H1 (cell line): ENCODE measurements at regions of chr3 and their contacts with region 1.

Region 1: GRCh38 chr3:12135029-12135657 is 23.6 kb downstream of the TIMP4 start:
- DNase-seq: peak; percentile 17 to 78
- H3K4me3 ChIP-seq: no peak overlapping the region
- H3K27ac ChIP-seq: no peak overlapping the region
- H3K4me1 ChIP-seq: no peaks in the 10 kb centered on the region
- H3K27me3 ChIP-seq: no peaks in the 10 kb centered on the region
- CTCF ChIP-seq: peak; percentile 86 to 92 (median 90)
- EP300 ChIP-seq: no peak
- POLR2A ChIP-seq: no peak
- RAD21 ChIP-seq: peak; percentile 87 to 92

Region 2: DNA sequence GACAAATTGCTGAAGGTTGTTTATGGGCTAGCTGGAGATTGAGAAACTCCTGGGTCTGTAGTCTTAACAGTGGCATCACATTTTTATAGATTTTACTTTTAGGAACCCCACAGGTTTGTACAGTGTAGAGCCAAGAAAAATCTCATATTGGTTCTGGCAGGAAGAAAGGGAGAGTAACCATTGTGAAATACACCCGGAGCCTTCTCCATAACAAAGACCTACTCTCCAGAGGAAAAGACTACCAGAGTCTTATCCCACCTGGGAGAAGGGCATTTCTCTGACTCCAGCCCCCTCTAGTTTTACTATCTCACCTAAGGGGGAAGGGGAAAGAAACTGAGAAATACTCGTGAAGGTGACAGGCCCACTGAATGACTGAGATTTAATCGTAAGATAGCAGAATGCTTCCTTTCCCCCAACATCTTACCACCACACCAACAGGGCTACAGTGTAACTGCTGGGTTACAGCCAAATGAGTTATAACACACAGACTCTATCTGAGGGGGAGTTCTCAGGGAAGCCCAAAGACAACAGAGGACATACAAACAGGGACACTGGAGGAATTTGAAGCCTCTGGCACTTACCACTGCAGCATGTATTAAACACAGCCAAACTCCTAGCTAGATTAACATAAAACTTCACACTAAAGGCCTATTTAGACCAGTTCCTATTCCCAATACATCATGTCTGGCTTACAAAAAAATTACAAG is 74.9 kb before region 1 on chr3:
- CTCF ChIA-PET with region 1: no interaction called
- POLR2A ChIA-PET with region 1: no interaction called
- DNase-seq: no peak
- H3K4me3 ChIP-seq: peak overlapping the region in 1 of 4 experiments; percentile 4; a peak in 1 of 8 replicates
- H3K27ac ChIP-seq: no peak overlapping the region
- H3K4me1 ChIP-seq: peaks cover 3 to 16% (median 7%) of the 10 kb centered on the region in 4 experiments; a peak in 4 of 7 replicates
- H3K27me3 ChIP-seq: no peaks in the 10 kb centered on the region
- CTCF ChIP-seq: no peak
- EP300 ChIP-seq: no peak
- POLR2A ChIP-seq: no peak
- RAD21 ChIP-seq: peak in 1 of 2 experiments; percentile 1; a peak in 1 of 4 replicates

Region 3: DNA sequence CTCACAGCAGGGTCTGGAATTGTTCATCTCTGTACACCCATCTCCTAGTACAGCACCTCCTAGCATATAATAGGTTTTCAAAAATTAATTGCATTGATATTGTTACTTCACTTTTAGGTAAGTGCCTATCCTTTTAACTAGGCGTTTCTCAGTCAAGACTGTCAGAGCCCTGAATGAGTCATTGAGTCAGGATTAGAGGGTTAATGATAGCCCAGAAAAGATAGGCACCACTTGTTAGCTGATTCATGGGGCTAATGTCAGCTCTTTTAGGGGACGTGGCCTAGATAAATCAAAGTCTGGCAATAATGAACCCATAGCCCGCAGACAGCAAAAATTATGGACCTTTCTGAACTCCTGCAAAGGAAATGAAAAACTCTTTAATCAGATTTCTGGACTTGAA is 19.3 kb before region 1 on chr3:
- CTCF ChIA-PET with region 1: interaction called, 10 read pairs
- POLR2A ChIA-PET with region 1: no interaction called
- DNase-seq: no peak
- H3K4me3 ChIP-seq: no peak overlapping the region
- H3K27ac ChIP-seq: no peak overlapping the region
- H3K4me1 ChIP-seq: no peaks in the 10 kb centered on the region
- H3K27me3 ChIP-seq: no peaks in the 10 kb centered on the region
- CTCF ChIP-seq: no peak
- EP300 ChIP-seq: no peak
- POLR2A ChIP-seq: no peak
- RAD21 ChIP-seq: no peak

Region 4: DNA sequence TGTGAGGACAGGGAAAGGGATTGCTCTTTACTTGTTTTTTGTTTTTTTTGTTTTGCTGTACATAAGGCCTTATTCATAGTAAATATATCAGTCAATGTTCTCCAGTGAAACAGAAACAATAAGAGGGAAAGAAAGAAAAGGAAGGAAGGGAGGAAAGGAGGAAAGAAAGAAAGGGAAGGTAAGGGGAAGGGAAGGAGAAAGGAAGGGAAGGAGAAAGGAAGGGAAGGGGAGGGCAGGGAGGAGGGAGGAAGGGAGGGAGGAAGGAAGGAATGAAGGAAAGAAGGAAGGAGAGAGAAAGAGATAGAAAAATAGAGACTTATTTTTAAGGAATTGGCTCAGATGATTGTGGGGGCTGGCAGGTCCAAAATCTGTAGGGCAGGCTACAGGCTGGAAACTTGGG is 13.7 kb before region 1 on chr3:
- CTCF ChIA-PET with region 1: interaction called, 10 read pairs
- POLR2A ChIA-PET with region 1: no interaction called
- DNase-seq: no peak
- H3K4me3 ChIP-seq: no peak overlapping the region
- H3K27ac ChIP-seq: no peak overlapping the region
- H3K4me1 ChIP-seq: no peaks in the 10 kb centered on the region
- H3K27me3 ChIP-seq: no peaks in the 10 kb centered on the region
- CTCF ChIP-seq: no peak
- EP300 ChIP-seq: no peak
- POLR2A ChIP-seq: no peak
- RAD21 ChIP-seq: no peak

Region 5: GRCh38 chr3:12149029-12149428 is 13.9 kb after region 1 on chr3:
- CTCF ChIA-PET with region 1: interaction called, 27 read pairs
- POLR2A ChIA-PET with region 1: no interaction called
- DNase-seq: no peak
- H3K4me3 ChIP-seq: no peak overlapping the region
- H3K27ac ChIP-seq: no peak overlapping the region
- H3K4me1 ChIP-seq: no peaks in the 10 kb centered on the region
- H3K27me3 ChIP-seq: no peaks in the 10 kb centered on the region
- CTCF ChIP-seq: no peak
- EP300 ChIP-seq: no peak
- POLR2A ChIP-seq: no peak
- RAD21 ChIP-seq: no peak

Region 6: GRCh38 chr3:12158387-12159226 is 23.5 kb after region 1 on chr3 and contains the start of gene TIMP4:
- CTCF ChIA-PET with region 1: interaction called, 18 read pairs
- POLR2A ChIA-PET with region 1: no interaction called
- DNase-seq: peak; percentile 36 to 69
- H3K4me3 ChIP-seq: peak within 1 kb of the TSS; percentile 42 to 57 (median 44); a peak in 7 of 8 replicates
- H3K27ac ChIP-seq: no peak within 1 kb of the TSS; the same call in 1 of the 2 replicates
- H3K4me1 ChIP-seq: peaks cover 4 to 15% (median 15%) of the 10 kb centered on the region in 4 experiments; a peak in 6 of 7 replicates
- H3K27me3 ChIP-seq: no peaks in the 10 kb centered on the region
- CTCF ChIP-seq: no peak
- EP300 ChIP-seq: no peak
- POLR2A ChIP-seq: no peak
- RAD21 ChIP-seq: no peak
- total RNA-seq, gene TIMP4: 7.5 and 8.7 TPM in 2 replicates

Region 7: DNA sequence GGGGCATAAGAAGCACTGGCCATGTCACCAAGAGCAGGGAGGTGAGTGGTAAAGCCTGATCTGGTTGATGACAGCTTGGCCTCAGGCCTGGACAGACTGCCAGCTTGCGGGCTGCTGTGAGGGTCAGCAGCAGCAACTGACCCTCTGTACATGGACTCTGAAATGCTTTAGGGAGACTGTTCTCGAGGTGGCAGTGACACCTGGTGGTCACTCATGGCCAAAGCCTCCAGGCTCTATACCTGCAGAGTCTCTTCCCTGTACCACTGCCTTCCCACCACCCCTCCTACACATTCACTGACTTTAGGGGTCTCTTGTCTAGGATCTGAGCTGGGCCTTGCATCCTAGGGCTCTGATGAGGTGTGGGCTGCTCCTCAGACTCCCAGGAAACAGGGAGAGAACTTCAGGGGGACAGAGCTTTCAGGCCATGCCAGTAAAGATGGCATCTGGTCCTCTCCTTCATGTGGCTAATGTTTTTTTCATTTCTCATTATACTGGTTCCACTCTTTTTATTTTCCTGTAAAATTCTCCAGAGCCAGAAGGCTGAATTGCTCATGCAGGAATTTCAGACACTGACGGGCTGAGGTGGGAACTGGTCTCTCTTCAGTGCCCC is 40.8 kb after region 1 on chr3:
- CTCF ChIA-PET with region 1: interaction called, 651 read pairs
- POLR2A ChIA-PET with region 1: interaction called, 4 read pairs
- DNase-seq: peak in 1 of 2 experiments; percentile 78
- H3K4me3 ChIP-seq: no peak overlapping the region
- H3K27ac ChIP-seq: no peak overlapping the region
- H3K4me1 ChIP-seq: no peaks in the 10 kb centered on the region
- H3K27me3 ChIP-seq: no peaks in the 10 kb centered on the region
- CTCF ChIP-seq: peak; percentile 88 to 91 (median 91)
- EP300 ChIP-seq: no peak
- POLR2A ChIP-seq: no peak
- RAD21 ChIP-seq: peak; percentile 94 to 96